ENCODE measurements at regions of chr12 and their contacts with region 1.

Region 1: GRCh38 chr12:56839915-56840325 is 76.8 kb downstream of the HSD17B6 start:
- DNase-seq: peak; percentile 2
- ATAC-seq: peak; percentile 77
- H3K4me3 ChIP-seq: no peak overlapping the region
- H3K27ac ChIP-seq: no peak overlapping the region
- H3K4me1 ChIP-seq: no peaks in the 10 kb centered on the region
- H3K27me3 ChIP-seq: no peaks in the 10 kb centered on the region
- CTCF ChIP-seq: peak; percentile 71 to 75 (median 74)
- EP300 ChIP-seq: no peak
- POLR2A ChIP-seq: no peak
- RAD21 ChIP-seq: peak; percentile 86

Region 2: DNA sequence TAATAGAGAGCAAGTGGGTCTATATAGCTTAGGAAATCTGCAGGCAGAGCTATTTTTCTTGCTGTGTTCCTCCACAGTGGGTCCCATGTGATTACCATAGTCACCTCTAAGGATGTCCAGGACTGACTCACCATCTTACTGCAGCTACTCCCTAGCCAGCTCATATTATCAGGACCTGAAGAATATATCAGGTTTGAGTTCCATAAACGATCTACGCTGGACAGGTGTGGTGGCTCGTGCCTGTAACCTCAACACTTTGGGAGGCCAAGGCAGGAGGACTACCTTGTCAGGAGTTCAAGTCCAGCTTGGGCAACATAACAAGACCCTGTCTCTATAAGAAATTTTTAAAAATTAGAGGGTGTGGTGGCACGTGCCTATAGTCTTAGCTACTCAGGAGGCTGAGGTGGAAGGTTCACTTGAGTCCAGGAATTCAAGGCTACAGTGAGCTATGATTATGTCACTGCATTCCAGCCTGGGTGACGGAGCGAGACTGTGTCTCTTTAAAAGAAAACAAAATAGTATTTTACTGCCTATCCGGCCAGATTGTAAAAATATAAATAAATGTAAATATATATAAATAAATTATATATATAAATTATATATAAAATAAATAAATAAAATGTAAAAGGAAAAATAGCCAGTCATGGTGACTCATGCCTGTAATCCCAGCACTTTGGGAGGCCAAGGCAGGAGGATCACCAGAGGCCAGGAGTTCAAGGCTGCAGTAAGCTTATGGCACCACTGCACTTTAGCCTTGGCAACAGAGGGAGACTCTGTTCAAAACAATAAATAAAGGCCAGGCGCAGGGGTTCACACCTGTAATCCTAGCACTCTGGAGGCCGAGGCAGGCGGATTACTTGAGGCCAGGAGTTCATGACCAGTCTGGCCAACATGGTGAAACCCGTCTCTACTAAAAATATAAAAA is 378.4 kb before region 1 on chr12:
- CTCF ChIA-PET with region 1: no interaction called
- POLR2A ChIA-PET with region 1: no interaction called
- RAD21 ChIA-PET with region 1: no interaction called
- SMC1A ChIA-PET with region 1: no interaction called
- in situ Hi-C with region 1: no loop called
- intact Hi-C with region 1: no loop called
- DNase-seq: no peak
- ATAC-seq: no peak; the same call in 2 of the 3 replicates
- H3K4me3 ChIP-seq: no peak overlapping the region
- H3K27ac ChIP-seq: no peak overlapping the region
- H3K4me1 ChIP-seq: peaks cover 10% of the 10 kb centered on the region
- H3K27me3 ChIP-seq: no peaks in the 10 kb centered on the region
- CTCF ChIP-seq: no peak
- EP300 ChIP-seq: no peak
- POLR2A ChIP-seq: no peak
- RAD21 ChIP-seq: no peak

Region 3: DNA sequence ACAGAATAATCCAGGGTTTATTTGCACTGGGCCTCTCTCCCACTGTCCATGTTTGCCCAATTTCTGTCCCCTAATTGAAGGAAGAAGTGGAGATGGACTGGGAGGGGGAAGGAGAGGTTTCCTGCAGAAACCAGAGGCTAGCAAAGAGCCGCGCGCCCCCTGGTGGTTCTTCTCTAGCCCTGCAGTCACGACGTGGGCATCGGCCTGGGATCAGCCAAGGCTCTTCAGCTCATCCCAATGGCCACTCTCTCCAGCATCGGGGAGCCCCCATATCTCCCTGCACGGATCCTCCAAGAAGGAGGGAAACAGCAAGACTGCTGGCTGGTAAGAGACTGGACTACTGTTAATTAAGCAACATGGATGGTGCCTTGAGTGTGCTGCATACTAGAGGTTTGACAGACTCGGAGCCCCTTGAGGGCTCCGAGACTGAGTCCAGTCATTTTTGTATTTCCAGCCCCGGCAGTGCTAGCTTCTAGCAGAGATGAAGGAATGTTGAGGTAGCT is 147.7 kb after region 1 on chr12:
- CTCF ChIA-PET with region 1: interaction called, 25 read pairs
- POLR2A ChIA-PET with region 1: no interaction called
- RAD21 ChIA-PET with region 1: interaction called, 7 read pairs
- SMC1A ChIA-PET with region 1: interaction called, 8 read pairs
- in situ Hi-C with region 1: loop called (anchors 5 kb)
- intact Hi-C with region 1: loop called (anchors 1 kb)
- DNase-seq: no peak
- ATAC-seq: peak; percentile 90
- H3K4me3 ChIP-seq: no peak overlapping the region
- H3K27ac ChIP-seq: no peak overlapping the region
- H3K4me1 ChIP-seq: peaks cover 18% of the 10 kb centered on the region
- H3K27me3 ChIP-seq: no peaks in the 10 kb centered on the region
- CTCF ChIP-seq: peak; percentile 93 to 97 (median 96)
- EP300 ChIP-seq: no peak
- POLR2A ChIP-seq: no peak
- RAD21 ChIP-seq: peak; percentile 88